ENCODE measurements at regions of chr16 and their contacts with region 1.

Region 1: DNA sequence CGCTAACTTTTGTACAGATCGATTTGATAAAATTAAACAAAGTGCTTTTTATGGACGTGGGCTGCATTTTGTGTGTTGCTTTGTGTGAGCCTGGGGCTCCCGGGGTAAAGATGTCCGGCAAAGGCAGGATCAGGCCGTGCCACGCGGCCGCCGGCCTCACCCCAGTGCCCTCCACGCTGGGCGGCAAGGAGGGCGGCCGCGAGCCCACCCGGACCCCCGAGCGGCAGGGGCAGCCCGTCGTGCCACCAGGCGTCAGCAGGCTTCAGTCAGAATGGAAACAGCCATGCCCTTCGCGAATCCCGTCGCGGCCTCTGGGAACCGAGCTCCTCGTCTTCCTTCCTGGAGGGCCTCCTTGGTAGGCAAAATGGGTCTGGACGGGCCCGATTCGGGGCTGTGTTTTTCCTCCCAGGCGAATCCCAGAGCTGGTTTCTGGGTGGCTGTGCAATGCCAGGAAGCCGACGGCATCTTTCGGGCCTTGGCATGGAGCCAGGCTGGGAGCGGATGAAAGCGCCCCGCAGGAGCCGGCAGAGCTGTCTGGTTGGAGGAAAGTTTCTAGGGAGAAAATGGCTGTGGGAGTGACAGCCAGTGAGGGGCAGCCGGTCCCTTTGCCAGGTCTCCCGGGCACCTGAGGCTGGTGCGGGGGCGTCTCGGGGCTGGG is 5.5 kb downstream of the SOX8 start:
- DNase-seq: no peak

Region 2: GRCh38 chr16:1036726-1037393 is 49.8 kb after region 1 on chr16:
- in situ Hi-C with region 1: loop called (anchors 5 kb)
- DNase-seq: peak; percentile 63

Region 3: GRCh38 chr16:1078579-1079021 is 91.5 kb after region 1 on chr16:
- in situ Hi-C with region 1: no loop called
- DNase-seq: peak; percentile 94